ENCODE measurements at regions of chr12 and their contacts with region 1.

Region 1: GRCh38 chr12:101876861-101877815 is at the start of gene DRAM1:
- DNase-seq: peak; percentile 97
- ATAC-seq: peak; percentile 97
- total RNA-seq, gene DRAM1: 6.2 TPM

Region 2: GRCh38 chr12:102061560-102062418 is 184.7 kb after region 1 on chr12 and contains the start of gene WASHC3:
- intact Hi-C with region 1: loop called (anchors 5 kb)
- DNase-seq: peak; percentile 98
- ATAC-seq: peak; percentile 100
- total RNA-seq, gene WASHC3: 37.8 TPM